ENCODE measurements at regions of chr15 and their contacts with region 1.

Region 1: GRCh38 chr15:70826634-70827033 is 27.3 kb downstream of the LARP6 start:
- DNase-seq: peak; percentile 56 to 63
- ATAC-seq: peak in 3 of 4 donors; percentile 25 to 69 (median 55)
- H3K4me3 ChIP-seq: no peak overlapping the region
- H3K27ac ChIP-seq: no peak overlapping the region
- H3K4me1 ChIP-seq: peaks cover 4% of the 10 kb centered on the region
- H3K27me3 ChIP-seq: no peaks in the 10 kb centered on the region
- CTCF ChIP-seq: no peak

Region 2: GRCh38 chr15:70806992-70807712 is 19.5 kb before region 1 on chr15:
- intact Hi-C with region 1: no loop called
- DNase-seq: peak; percentile 44 to 64
- ATAC-seq: no peak
- H3K4me3 ChIP-seq: no peak overlapping the region
- H3K27ac ChIP-seq: no peak overlapping the region
- H3K4me1 ChIP-seq: peaks cover 6% of the 10 kb centered on the region
- H3K27me3 ChIP-seq: no peaks in the 10 kb centered on the region
- CTCF ChIP-seq: no peak

Region 3: GRCh38 chr15:70875001-70875782 is 48.6 kb after region 1 on chr15:
- intact Hi-C with region 1: loop called (anchors 1 to 5 kb)
- DNase-seq: no peak
- ATAC-seq: peak in 1 of 4 donors; percentile 52
- H3K4me3 ChIP-seq: no peak overlapping the region
- H3K27ac ChIP-seq: no peak overlapping the region
- H3K4me1 ChIP-seq: no peaks in the 10 kb centered on the region
- H3K27me3 ChIP-seq: peaks cover 0 to 8% (median 0%) of the 10 kb centered on the region in 3 donors
- CTCF ChIP-seq: peak; percentile 45

Region 4: DNA sequence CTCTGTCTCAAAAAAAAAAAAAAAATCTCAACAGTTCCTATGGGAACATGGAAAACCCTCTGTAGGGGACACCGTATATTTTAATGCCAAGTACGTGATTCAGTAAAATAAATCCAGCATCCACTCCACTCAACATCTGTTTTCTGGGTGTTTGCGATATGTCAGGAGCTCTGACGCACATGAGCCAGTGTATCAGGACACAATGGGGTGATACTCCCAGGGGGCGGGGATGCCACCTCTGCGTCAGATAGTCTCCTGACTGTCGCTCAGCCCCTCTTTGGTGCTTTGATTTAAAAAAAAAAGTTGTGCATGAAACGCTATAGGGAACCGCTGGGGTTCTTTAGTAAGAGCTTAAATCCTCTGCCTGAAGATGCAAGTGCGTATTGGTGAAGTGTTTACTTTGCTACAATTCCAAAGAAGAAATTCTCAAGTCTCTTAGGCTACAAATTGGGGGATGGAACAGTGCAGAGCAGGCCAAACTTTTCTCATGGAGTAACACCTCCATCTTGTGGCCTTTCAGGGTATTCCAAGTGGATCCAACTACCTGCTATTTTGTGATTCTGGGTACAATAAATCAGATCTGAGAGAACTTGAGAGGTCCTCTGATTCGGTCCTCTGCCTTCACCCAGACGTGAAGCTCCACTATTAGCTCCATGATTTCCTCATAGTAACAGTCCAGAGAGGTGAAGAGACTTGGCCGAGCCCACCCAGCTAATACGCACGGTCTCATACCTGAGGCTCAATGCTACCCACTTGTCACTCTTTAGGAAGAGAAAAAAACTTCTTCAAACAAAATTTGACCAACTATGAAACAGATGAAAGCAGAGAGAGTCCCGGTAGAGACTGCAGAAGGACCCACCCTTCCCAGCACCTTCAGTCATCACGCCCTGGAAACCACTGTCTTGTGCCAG is 974.5 kb after region 1 on chr15:
- intact Hi-C with region 1: loop called in 1 of 2 experiments (anchors 10 kb)
- DNase-seq: no peak
- ATAC-seq: peak; percentile 68 to 82 (median 77)
- H3K4me3 ChIP-seq: no peak overlapping the region
- H3K27ac ChIP-seq: no peak overlapping the region
- H3K4me1 ChIP-seq: no peaks in the 10 kb centered on the region
- H3K27me3 ChIP-seq: no peaks in the 10 kb centered on the region
- CTCF ChIP-seq: peak; percentile 80